ENCODE measurements at regions of chr6 and their contacts with region 1.

Region 1: GRCh38 chr6:109117346-109118035 is 22.2 kb downstream of the CEP57L1 start:
- DNase-seq: peak; percentile 85
- ATAC-seq: peak; percentile 93
- H3K4me3 ChIP-seq: no peak overlapping the region
- H3K27ac ChIP-seq: peak overlapping the region; percentile 33; the same call in 1 of the 2 replicates
- H3K4me1 ChIP-seq: peaks cover 13% of the 10 kb centered on the region
- H3K27me3 ChIP-seq: no peaks in the 10 kb centered on the region
- CTCF ChIP-seq: no peak
- EP300 ChIP-seq: peak in 1 of 2 experiments; percentile 69; a peak in 2 of 4 replicates
- POLR2A ChIP-seq: no peak
- RAD21 ChIP-seq: no peak

Region 2: GRCh38 chr6:109062767-109063352 is 54.6 kb before region 1 on chr6:
- CTCF ChIA-PET with region 1: no interaction called
- POLR2A ChIA-PET with region 1: no interaction called
- RAD21 ChIA-PET with region 1: no interaction called
- SMC1A ChIA-PET with region 1: no interaction called
- in situ Hi-C with region 1: no loop called
- intact Hi-C with region 1: no loop called
- DNase-seq: no peak
- ATAC-seq: no peak
- H3K4me3 ChIP-seq: no peak overlapping the region
- H3K27ac ChIP-seq: no peak overlapping the region
- H3K4me1 ChIP-seq: no peaks in the 10 kb centered on the region
- H3K27me3 ChIP-seq: no peaks in the 10 kb centered on the region; a peak in 2 of 4 replicates
- CTCF ChIP-seq: no peak
- EP300 ChIP-seq: no peak
- POLR2A ChIP-seq: no peak
- RAD21 ChIP-seq: no peak

Region 3: GRCh38 chr6:109095027-109095834 is 22.3 kb before region 1 on chr6 and contains the start of gene CEP57L1:
- CTCF ChIA-PET with region 1: interaction called, 8 read pairs
- POLR2A ChIA-PET with region 1: interaction called, 10 read pairs
- RAD21 ChIA-PET with region 1: interaction called, 9 read pairs
- SMC1A ChIA-PET with region 1: interaction called, 24 read pairs
- in situ Hi-C with region 1: no loop called
- intact Hi-C with region 1: no loop called
- DNase-seq: peak; percentile 88
- ATAC-seq: peak; percentile 81
- H3K4me3 ChIP-seq: peak within 1 kb of the TSS; percentile 90
- H3K27ac ChIP-seq: peak within 1 kb of the TSS; percentile 94
- H3K4me1 ChIP-seq: no peaks in the 10 kb centered on the region
- H3K27me3 ChIP-seq: no peaks in the 10 kb centered on the region
- CTCF ChIP-seq: peak; percentile 14 to 23 (median 14); a peak in 2 of 6 replicates
- EP300 ChIP-seq: no peak
- POLR2A ChIP-seq: peak; percentile 84
- RAD21 ChIP-seq: no peak
- polyA plus RNA-seq, gene CEP57L1: 22.6 to 24.0 TPM

Region 4: GRCh38 chr6:109103942-109104341 is 13.5 kb before region 1 on chr6:
- CTCF ChIA-PET with region 1: interaction called, 6 read pairs
- POLR2A ChIA-PET with region 1: interaction called, 9 read pairs
- RAD21 ChIA-PET with region 1: no interaction called
- SMC1A ChIA-PET with region 1: interaction called, 17 read pairs
- in situ Hi-C with region 1: no loop called
- intact Hi-C with region 1: no loop called
- DNase-seq: no peak
- ATAC-seq: peak; percentile 89
- H3K4me3 ChIP-seq: no peak overlapping the region
- H3K27ac ChIP-seq: no peak overlapping the region
- H3K4me1 ChIP-seq: peaks cover 4% of the 10 kb centered on the region; the same call in 1 of the 2 replicates
- H3K27me3 ChIP-seq: no peaks in the 10 kb centered on the region
- CTCF ChIP-seq: no peak
- EP300 ChIP-seq: no peak
- POLR2A ChIP-seq: no peak
- RAD21 ChIP-seq: no peak